ENCODE measurements at regions of chr22 and their contacts with region 1.

Region 1: GRCh38 chr22:40679964-40680818 is 907 bp downstream of the MCHR1 start:
- DNase-seq: no peak
- ATAC-seq: no peak
- H3K4me3 ChIP-seq: no peak overlapping the region
- H3K4me3 Mint-ChIP-seq: no peak overlapping the region
- H3K27ac ChIP-seq: no peak overlapping the region
- H3K27ac Mint-ChIP-seq: peak overlapping the region in 1 of 9 donors; percentile 34
- H3K4me1 ChIP-seq: no peaks in the 10 kb centered on the region
- H3K4me1 Mint-ChIP-seq: peaks cover 4 to 31% (median 9%) of the 10 kb centered on the region in 7 donors
- H3K27me3 ChIP-seq: no peaks in the 10 kb centered on the region
- H3K27me3 Mint-ChIP-seq: peaks cover 0 to 16% (median 15%) of the 10 kb centered on the region in 5 donors

Region 2: DNA sequence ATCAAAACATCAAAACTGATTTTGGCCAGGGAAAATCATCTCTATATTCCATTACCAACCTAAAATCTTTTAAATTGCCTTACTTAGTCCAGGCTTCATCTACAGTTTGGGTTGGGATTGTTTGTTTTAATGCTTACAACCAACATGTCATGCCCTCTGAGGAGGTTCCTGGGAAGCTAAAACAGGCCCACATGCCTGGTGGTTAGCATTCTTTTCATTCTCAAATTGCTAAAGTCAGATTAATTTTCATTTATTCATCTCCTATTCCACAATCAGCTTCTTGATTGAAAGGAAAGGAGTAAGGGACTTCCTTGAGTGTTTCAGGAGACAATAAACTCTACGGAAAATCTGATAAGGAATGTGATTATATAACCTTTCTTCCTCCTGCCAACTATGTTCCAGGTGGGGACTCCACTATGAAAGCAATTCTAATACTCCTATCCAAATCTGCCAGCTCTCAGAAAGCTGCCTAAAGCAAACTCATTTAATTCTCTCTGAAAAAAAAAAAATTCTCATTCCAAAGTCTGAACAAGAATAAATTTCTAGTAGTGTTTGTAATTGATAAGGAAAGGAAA is 74.4 kb before region 1 on chr22:
- CTCF ChIA-PET with region 1: no interaction called
- POLR2A ChIA-PET with region 1: no interaction called
- intact Hi-C with region 1: no loop called
- DNase-seq: no peak
- ATAC-seq: no peak
- H3K4me3 ChIP-seq: no peak overlapping the region
- H3K4me3 Mint-ChIP-seq: peak overlapping the region in 2 of 10 donors; percentile 7 to 20
- H3K27ac ChIP-seq: no peak overlapping the region
- H3K27ac Mint-ChIP-seq: no peak overlapping the region
- H3K4me1 ChIP-seq: peaks cover 9% of the 10 kb centered on the region in 2 donors
- H3K4me1 Mint-ChIP-seq: peaks cover 31 to 83% (median 75%) of the 10 kb centered on the region in 7 donors
- H3K27me3 ChIP-seq: no peaks in the 10 kb centered on the region
- H3K27me3 Mint-ChIP-seq: no peaks in the 10 kb centered on the region

Region 3: GRCh38 chr22:40701274-40701673 is 21.1 kb after region 1 on chr22:
- CTCF ChIA-PET with region 1: interaction called, 14 read pairs
- POLR2A ChIA-PET with region 1: interaction called, 5 read pairs
- intact Hi-C with region 1: no loop called
- DNase-seq: no peak
- ATAC-seq: no peak
- H3K4me3 ChIP-seq: no peak overlapping the region
- H3K4me3 Mint-ChIP-seq: peak overlapping the region in 4 of 10 donors; percentile 5 to 65 (median 33)
- H3K27ac ChIP-seq: no peak overlapping the region
- H3K27ac Mint-ChIP-seq: peak overlapping the region in 6 of 9 donors; percentile 2 to 73 (median 18)
- H3K4me1 ChIP-seq: peaks cover 0 to 11% of the 10 kb centered on the region in 2 donors
- H3K4me1 Mint-ChIP-seq: peaks cover 8 to 30% (median 19%) of the 10 kb centered on the region in 7 donors
- H3K27me3 ChIP-seq: no peaks in the 10 kb centered on the region
- H3K27me3 Mint-ChIP-seq: peaks cover 0 to 7% (median 0%) of the 10 kb centered on the region in 5 donors

Region 4: DNA sequence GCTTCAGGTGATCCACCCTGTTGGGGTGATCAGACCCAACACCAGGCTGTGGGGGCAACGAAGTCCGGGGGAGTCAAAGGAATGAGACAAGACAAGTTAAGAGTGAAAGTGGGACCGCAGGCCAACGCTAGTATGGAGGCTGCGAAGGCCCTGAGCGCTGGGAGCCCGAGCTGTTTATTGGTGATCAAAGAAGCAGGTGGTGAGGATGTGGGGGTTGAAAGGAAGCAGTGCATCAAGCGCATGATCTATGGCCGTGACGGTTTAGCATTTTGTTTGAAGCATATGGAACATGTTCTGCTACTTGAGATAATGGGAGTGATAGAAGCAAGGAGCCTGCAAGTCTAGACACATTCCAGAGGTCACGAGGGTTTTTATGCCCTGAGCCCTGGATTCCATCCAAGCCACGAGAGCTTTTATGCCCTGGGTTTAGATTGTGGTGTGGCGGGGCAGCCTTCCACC is 48.6 kb after region 1 on chr22:
- CTCF ChIA-PET with region 1: interaction called, 8 read pairs
- POLR2A ChIA-PET with region 1: interaction called, 8 read pairs
- intact Hi-C with region 1: loop called (anchors 1 to 5 kb)
- DNase-seq: peak; percentile 29 to 87 (median 83)
- ATAC-seq: peak; percentile 75
- H3K4me3 ChIP-seq: peak overlapping the region; percentile 40
- H3K4me3 Mint-ChIP-seq: peak overlapping the region; percentile 61 to 81 (median 67)
- H3K27ac ChIP-seq: peak overlapping the region; percentile 80
- H3K27ac Mint-ChIP-seq: peak overlapping the region; percentile 86 to 99 (median 98)
- H3K4me1 ChIP-seq: peaks cover 42 to 62% of the 10 kb centered on the region in 2 donors
- H3K4me1 Mint-ChIP-seq: peaks cover 37 to 66% (median 54%) of the 10 kb centered on the region in 7 donors
- H3K27me3 ChIP-seq: no peaks in the 10 kb centered on the region
- H3K27me3 Mint-ChIP-seq: peaks cover 0 to under 1% (median 0%) of the 10 kb centered on the region in 5 donors

Region 5: DNA sequence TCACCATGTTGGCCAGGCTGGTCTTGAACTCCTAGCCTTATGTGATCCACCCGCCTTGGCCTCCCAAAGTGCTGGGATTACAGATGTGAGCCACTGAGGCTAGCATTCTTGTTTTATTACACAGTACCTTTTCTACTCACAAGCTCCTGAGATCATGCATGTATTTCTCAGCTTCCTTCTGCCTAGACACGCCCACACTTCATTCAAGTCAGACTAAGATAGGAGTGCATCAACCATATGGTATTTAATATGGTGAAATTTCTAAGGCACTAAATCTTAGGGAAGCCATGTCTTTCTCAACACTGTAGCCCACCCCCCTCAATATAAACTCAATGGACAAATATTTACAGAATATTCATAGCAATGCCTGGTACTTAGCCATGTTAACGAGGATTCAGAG is 76.9 kb after region 1 on chr22:
- CTCF ChIA-PET with region 1: interaction called, 145 read pairs
- POLR2A ChIA-PET with region 1: interaction called, 32 read pairs
- intact Hi-C with region 1: loop called (anchors 1 kb)
- DNase-seq: no peak
- ATAC-seq: no peak
- H3K4me3 ChIP-seq: no peak overlapping the region
- H3K4me3 Mint-ChIP-seq: no peak overlapping the region
- H3K27ac ChIP-seq: no peak overlapping the region
- H3K27ac Mint-ChIP-seq: no peak overlapping the region
- H3K4me1 ChIP-seq: no peaks in the 10 kb centered on the region
- H3K4me1 Mint-ChIP-seq: peaks cover 0 to 10% (median 1%) of the 10 kb centered on the region in 7 donors
- H3K27me3 ChIP-seq: no peaks in the 10 kb centered on the region
- H3K27me3 Mint-ChIP-seq: peaks cover 0 to 1% (median 0%) of the 10 kb centered on the region in 5 donors

Region 6: GRCh38 chr22:40818747-40819598 is 138.8 kb after region 1 on chr22 and contains the start of gene SLC25A17:
- CTCF ChIA-PET with region 1: interaction called, 12 read pairs
- POLR2A ChIA-PET with region 1: no interaction called
- intact Hi-C with region 1: loop called (anchors 1 kb)
- DNase-seq: peak; percentile 71 to 88 (median 82)
- ATAC-seq: peak; percentile 95
- H3K4me3 ChIP-seq: peak within 1 kb of the TSS; percentile 100
- H3K4me3 Mint-ChIP-seq: peak within 1 kb of the TSS; percentile 79 to 99 (median 93)
- H3K27ac ChIP-seq: peak within 1 kb of the TSS; percentile 86
- H3K27ac Mint-ChIP-seq: peak within 1 kb of the TSS; percentile 57 to 96 (median 88)
- H3K4me1 ChIP-seq: peaks cover 9 to 26% of the 10 kb centered on the region in 2 donors
- H3K4me1 Mint-ChIP-seq: peaks cover 22 to 42% (median 37%) of the 10 kb centered on the region in 7 donors
- H3K27me3 ChIP-seq: no peaks in the 10 kb centered on the region
- H3K27me3 Mint-ChIP-seq: no peaks in the 10 kb centered on the region
- total RNA-seq, gene SLC25A17: 6.8 to 22.1 (median 13.1) TPM

Region 7: GRCh38 chr22:40898850-40899357 is 218.7 kb after region 1 on chr22:
- CTCF ChIA-PET with region 1: interaction called, 26 read pairs
- POLR2A ChIA-PET with region 1: no interaction called
- intact Hi-C with region 1: loop called (anchors 1 kb)
- DNase-seq: peak in 7 of 9 donors; percentile 12 to 52 (median 37)
- ATAC-seq: peak; percentile 67
- H3K4me3 ChIP-seq: no peak overlapping the region
- H3K4me3 Mint-ChIP-seq: peak overlapping the region in 1 of 10 donors; percentile 28
- H3K27ac ChIP-seq: no peak overlapping the region
- H3K27ac Mint-ChIP-seq: peak overlapping the region in 2 of 9 donors; percentile 36 to 44
- H3K4me1 ChIP-seq: no peaks in the 10 kb centered on the region
- H3K4me1 Mint-ChIP-seq: peaks cover 4 to 9% (median 5%) of the 10 kb centered on the region in 7 donors
- H3K27me3 ChIP-seq: no peaks in the 10 kb centered on the region
- H3K27me3 Mint-ChIP-seq: no peaks in the 10 kb centered on the region